ENCODE measurements at regions of chr15 and their contacts with region 1.

Region 1: GRCh38 chr15:89243691-89244471 is at the start of gene FANCI:
- DNase-seq: peak; percentile 96
- ATAC-seq: peak; percentile 94
- H3K4me3 Mint-ChIP-seq: peak within 1 kb of the TSS; percentile 94
- H3K27ac Mint-ChIP-seq: peak within 1 kb of the TSS; percentile 89
- H3K4me1 Mint-ChIP-seq: peaks cover 31% of the 10 kb centered on the region
- H3K27me3 Mint-ChIP-seq: peaks cover 13% of the 10 kb centered on the region
- total RNA-seq, gene FANCI: 155 to 161 TPM

Region 2: GRCh38 chr15:89096664-89097063 is 147.2 kb before region 1 on chr15:
- POLR2A ChIA-PET with region 1: no interaction called
- DNase-seq: no peak
- ATAC-seq: no peak
- H3K4me3 Mint-ChIP-seq: no peak overlapping the region
- H3K27ac Mint-ChIP-seq: no peak overlapping the region
- H3K4me1 Mint-ChIP-seq: peaks cover 10% of the 10 kb centered on the region
- H3K27me3 Mint-ChIP-seq: no peaks in the 10 kb centered on the region

Region 3: GRCh38 chr15:89192766-89193165 is 51.1 kb before region 1 on chr15:
- POLR2A ChIA-PET with region 1: no interaction called
- DNase-seq: no peak
- ATAC-seq: no peak
- H3K4me3 Mint-ChIP-seq: no peak overlapping the region
- H3K27ac Mint-ChIP-seq: no peak overlapping the region
- H3K4me1 Mint-ChIP-seq: peaks cover 3% of the 10 kb centered on the region
- H3K27me3 Mint-ChIP-seq: no peaks in the 10 kb centered on the region

Region 4: DNA sequence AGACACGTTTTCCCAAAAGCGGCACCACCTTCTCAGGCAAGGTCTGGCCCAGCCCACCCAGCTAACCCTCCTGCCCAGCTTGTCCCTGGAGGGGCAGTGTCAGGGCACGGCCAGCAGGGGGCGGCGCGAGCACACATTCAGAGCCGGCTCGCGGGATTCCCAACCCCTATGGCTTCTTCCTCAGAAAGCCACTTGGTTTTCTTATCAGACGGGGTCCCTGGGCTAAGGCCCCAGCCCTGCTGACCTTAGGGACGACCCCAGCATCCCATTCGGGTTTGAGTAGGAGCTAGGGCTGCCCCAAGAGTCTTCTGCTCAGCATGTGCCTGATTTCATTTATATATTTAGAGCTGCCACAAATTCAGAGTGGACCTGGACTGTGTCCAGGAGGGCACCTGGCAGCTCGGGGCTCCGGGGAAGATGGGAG is 37.0 kb before region 1 on chr15:
- POLR2A ChIA-PET with region 1: interaction called, 19 read pairs
- DNase-seq: peak; percentile 82
- ATAC-seq: peak; percentile 54
- H3K4me3 Mint-ChIP-seq: no peak overlapping the region
- H3K27ac Mint-ChIP-seq: peak overlapping the region; percentile 10
- H3K4me1 Mint-ChIP-seq: peaks cover 29% of the 10 kb centered on the region
- H3K27me3 Mint-ChIP-seq: peaks cover 2% of the 10 kb centered on the region

Region 5: GRCh38 chr15:89230277-89230676 is 13.6 kb before region 1 on chr15:
- POLR2A ChIA-PET with region 1: no interaction called
- DNase-seq: no peak
- ATAC-seq: no peak
- H3K4me3 Mint-ChIP-seq: no peak overlapping the region
- H3K27ac Mint-ChIP-seq: no peak overlapping the region
- H3K4me1 Mint-ChIP-seq: no peaks in the 10 kb centered on the region
- H3K27me3 Mint-ChIP-seq: peaks cover 35% of the 10 kb centered on the region

Region 6: DNA sequence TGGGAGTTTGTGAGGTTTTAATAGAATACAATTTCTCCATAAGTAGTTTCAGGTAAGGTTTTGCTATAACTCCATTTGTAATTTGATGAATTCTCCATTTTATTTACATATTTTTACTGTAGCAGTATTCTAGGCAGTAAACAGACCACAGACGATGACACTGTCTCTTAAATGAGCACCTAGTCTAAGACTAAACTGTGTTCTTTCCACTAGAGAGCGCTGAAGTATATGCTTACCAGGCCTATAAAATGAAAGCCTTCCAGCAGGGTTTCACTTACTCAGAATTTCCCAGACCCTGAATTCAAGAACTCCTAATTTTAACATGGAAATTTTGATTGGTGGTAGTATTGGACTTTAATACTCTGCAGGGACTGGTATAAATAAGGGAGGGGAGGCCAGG is 49.1 kb after region 1 on chr15:
- POLR2A ChIA-PET with region 1: no interaction called
- DNase-seq: no peak
- ATAC-seq: no peak
- H3K4me3 Mint-ChIP-seq: no peak overlapping the region
- H3K27ac Mint-ChIP-seq: no peak overlapping the region
- H3K4me1 Mint-ChIP-seq: peaks cover under 1% of the 10 kb centered on the region
- H3K27me3 Mint-ChIP-seq: no peaks in the 10 kb centered on the region

Region 7: GRCh38 chr15:89332446-89332845 is 88.6 kb after region 1 on chr15:
- POLR2A ChIA-PET with region 1: interaction called, 10 read pairs
- DNase-seq: no peak
- ATAC-seq: no peak
- H3K4me3 Mint-ChIP-seq: peak overlapping the region; percentile 80
- H3K27ac Mint-ChIP-seq: peak overlapping the region; percentile 45
- H3K4me1 Mint-ChIP-seq: peaks cover 55% of the 10 kb centered on the region
- H3K27me3 Mint-ChIP-seq: peaks cover 5% of the 10 kb centered on the region

Measured in activated naive CD8-positive, alpha-beta T cell treated with anti-CD3 and anti-CD28 coated beads, Interleukin-2, amount 10 ng/mL, durations not matched to agents 7 days and 5 days (primary cell).